ENCODE measurements at regions of chr6 and their contacts with region 1.

Region 1: DNA sequence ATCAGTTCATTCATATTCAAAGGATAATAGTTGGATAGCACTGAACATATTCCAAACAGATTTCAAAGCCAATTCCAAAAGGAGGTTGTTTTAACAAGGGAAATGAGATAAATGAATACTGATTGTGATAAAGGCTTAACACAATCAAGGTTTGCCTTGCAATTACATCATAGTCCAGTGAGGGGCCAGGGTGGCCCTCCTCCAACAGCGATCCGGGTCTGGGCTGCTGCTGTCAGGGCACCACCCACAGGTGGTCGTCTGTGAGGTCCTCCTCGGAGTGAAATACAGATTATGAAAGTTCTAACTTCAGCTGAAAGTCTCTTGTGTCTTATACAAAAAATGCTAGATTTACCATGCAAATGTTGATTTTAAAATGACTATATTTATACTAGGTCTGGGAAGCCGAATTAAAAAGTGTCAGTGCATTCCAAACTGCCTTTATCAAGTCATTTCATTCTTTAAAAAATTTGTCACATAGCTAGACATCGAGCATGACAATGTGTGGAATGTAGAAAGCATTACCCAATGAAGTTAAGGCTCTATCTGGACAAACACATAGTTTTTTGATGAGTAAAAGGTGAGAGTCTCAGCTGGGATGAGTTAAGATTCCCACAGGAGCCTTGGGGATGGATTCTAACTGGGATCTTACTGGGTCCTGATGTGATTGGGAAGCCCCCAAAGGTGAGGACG is 65.9 kb upstream of the SLC22A23 start:
- DNase-seq: no peak
- H3K4me3 ChIP-seq: no peak overlapping the region
- H3K27ac ChIP-seq: no peak overlapping the region
- H3K27me3 ChIP-seq: no peaks in the 10 kb centered on the region
- CTCF ChIP-seq: no peak

Region 2: DNA sequence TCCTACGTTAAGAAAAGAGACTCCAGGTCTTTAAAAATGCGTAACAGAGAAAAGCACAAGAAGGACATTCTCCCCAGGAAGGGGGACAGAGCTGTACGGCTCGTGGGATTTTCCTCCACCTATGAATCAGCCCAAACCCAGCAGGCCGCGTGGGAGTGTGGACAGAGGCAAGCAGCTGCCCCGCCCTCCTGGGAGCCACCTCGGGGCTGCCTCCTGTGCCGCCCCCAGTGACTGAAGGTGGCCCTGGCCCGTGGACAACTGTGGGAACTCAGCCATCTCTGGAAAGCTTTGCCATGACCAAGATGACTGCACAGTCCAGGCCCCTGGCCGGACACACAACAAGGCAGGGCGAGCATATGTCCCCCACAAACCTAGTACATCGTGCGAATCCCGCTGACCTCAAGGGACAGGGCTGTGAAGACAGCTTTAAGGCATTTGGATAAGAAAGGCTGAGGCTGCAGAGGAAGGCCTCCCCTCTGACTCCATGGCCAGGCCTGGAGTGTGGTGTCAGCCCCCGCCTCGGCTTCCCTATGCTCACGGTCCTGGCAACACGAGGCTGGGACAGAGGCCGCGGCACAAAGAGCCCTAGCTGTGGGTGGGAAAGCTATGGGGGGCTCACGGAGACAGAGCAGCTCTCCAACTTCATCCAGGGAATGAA is 201.9 kb after region 1 on chr6:
- intact Hi-C with region 1: loop called in 1 of 2 experiments (anchors 5 kb)
- DNase-seq: peak in 2 of 10 donors; percentile 43 to 71
- H3K4me3 ChIP-seq: no peak overlapping the region
- H3K27ac ChIP-seq: peak overlapping the region in 20 of 59 donors; percentile 2 to 76 (median 46)
- H3K27me3 ChIP-seq: no peaks in the 10 kb centered on the region
- CTCF ChIP-seq: no peak

Region 3: DNA sequence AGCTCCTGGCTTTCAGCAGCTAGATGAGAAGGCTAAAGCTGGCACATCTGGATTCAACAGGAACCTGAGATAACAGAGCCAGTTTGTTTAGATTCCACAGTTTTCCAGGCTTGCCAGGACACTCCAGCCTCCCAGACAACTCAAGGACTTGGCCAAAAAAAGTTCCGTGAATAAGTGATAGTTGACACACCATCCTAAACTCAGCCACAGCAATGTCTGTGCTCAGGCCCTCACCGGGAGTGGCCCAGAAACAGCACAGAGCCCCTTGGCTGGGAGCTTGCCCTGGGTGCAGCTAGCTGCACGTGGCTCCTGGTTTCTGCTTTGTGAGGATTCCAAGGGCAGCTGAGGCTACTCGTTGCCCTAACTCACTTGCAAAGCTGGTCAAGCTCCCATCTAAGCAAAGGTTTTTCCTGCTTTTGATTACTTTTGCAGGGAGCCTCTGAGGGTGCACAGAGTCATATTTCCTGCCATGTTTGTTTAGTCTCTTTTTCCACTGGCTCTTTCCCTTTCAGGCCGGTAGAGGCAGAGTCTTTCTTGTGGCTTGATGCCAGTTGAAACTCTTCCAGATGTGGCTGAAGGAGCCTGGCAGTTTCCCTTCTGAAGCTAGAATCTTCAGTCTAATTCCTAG is 731.0 kb after region 1 on chr6:
- intact Hi-C with region 1: no loop called
- DNase-seq: no peak
- H3K4me3 ChIP-seq: no peak overlapping the region
- H3K27ac ChIP-seq: no peak overlapping the region
- H3K27me3 ChIP-seq: no peaks in the 10 kb centered on the region
- CTCF ChIP-seq: peak in 28 of 56 donors; percentile 10 to 41 (median 26)

Measured in dorsolateral prefrontal cortex (tissue), 120 donors.